ENCODE measurements at regions of chr7 and their contacts with region 1.

Region 1: DNA sequence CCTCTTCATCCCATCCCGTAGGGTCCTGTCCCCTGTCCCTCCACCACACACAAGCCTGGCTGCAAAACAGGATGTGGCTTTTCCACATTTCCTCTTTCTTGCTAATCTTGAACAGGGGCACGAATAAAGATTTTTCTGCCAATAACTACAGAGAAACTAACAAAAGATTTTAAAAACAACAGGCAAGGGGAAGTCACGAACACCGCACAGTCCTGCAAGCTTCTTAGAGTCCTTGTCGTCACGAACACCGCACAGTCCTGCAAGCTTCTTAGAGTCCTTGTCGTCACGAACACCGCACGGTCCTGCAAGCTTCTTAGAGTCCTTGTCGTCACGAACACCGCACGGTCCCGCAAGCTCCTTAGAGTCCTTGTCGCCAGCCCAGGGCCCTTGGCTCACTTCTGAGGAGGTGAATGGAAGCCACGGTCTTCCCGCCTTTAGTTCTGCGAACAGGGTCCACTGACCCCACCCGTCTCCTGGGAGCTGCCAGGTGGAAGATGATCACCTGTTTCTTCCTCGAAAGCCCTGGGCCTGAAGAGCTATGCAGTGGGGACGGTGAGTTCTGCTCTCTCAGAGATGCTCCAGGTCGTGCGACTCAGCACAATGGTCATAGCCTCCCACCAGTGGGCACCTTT is 10.3 kb upstream of the INSIG1 start:
- DNase-seq: no peak
- ATAC-seq: no peak
- H3K4me3 Mint-ChIP-seq: no peak overlapping the region
- H3K27ac Mint-ChIP-seq: peak overlapping the region; percentile 17
- H3K4me1 Mint-ChIP-seq: peaks cover 39% of the 10 kb centered on the region
- H3K27me3 Mint-ChIP-seq: peaks cover 3% of the 10 kb centered on the region
- CTCF ChIP-seq: no peak

Region 2: GRCh38 chr7:155298834-155299534 is 11.6 kb after region 1 on chr7:
- CTCF ChIA-PET with region 1: interaction called, 4 read pairs
- POLR2A ChIA-PET with region 1: interaction called, 16 read pairs
- intact Hi-C with region 1: no loop called
- DNase-seq: peak; percentile 98
- ATAC-seq: peak; percentile 80
- H3K4me3 Mint-ChIP-seq: peak overlapping the region; percentile 96
- H3K27ac Mint-ChIP-seq: peak overlapping the region; percentile 93
- H3K4me1 Mint-ChIP-seq: peaks cover 43% of the 10 kb centered on the region
- H3K27me3 Mint-ChIP-seq: no peaks in the 10 kb centered on the region
- CTCF ChIP-seq: no peak

Region 3: GRCh38 chr7:155644178-155644970 is 357.0 kb after region 1 on chr7 and contains the start of gene RBM33:
- CTCF ChIA-PET with region 1: no interaction called
- POLR2A ChIA-PET with region 1: no interaction called
- intact Hi-C with region 1: no loop called
- DNase-seq: peak; percentile 85
- ATAC-seq: peak; percentile 82
- H3K4me3 Mint-ChIP-seq: peak within 1 kb of the TSS; percentile 89
- H3K27ac Mint-ChIP-seq: peak within 1 kb of the TSS; percentile 98
- H3K4me1 Mint-ChIP-seq: peaks cover 39% of the 10 kb centered on the region
- H3K27me3 Mint-ChIP-seq: no peaks in the 10 kb centered on the region
- CTCF ChIP-seq: no peak
- total RNA-seq, gene RBM33: 73.7 to 84.8 TPM